ENCODE measurements at regions of chr12 and their contacts with region 1.

Region 1: DNA sequence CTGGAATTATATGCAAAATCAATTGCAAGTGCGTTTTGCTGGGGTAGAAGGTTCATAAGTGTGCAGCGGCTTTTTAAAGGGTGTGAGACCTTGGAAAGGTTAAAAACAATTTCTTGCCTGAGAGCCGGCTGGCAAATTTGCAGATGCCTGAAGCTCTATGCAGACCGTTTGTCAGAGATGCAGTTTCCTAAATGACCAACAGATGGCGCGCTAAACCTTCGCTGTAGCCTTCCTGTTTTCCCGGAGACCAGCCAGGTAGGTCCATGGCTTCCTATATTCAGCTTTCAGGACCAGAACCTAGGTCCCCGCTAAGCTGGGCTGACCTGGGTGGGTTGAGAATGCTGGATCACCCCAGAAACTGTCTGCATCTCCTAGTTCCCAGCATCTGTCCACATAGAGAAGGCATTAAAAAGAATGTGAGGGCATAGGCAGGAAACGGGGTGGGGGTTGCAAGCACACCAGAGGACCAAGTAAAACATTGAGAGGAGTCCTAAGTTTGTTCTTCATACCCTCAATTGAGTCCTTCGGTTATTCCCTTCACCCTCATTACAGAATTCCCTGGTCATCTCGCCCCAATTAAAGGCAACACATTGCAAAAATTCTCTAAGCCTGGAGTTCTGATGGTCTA is 5.7 kb upstream of the NOS1 start:
- DNase-seq: peak; percentile 76
- H3K4me3 ChIP-seq: peak overlapping the region in 1 of 2 experiments; percentile 7; a peak in 1 of 4 replicates
- H3K27ac ChIP-seq: peak overlapping the region in 1 of 2 experiments; percentile 65; a peak in 2 of 4 replicates
- H3K4me1 ChIP-seq: peaks cover 0 to 53% of the 10 kb centered on the region in 2 experiments; a peak in 2 of 4 replicates
- H3K27me3 ChIP-seq: peaks cover 10% of the 10 kb centered on the region; the same call in 1 of the 2 replicates
- CTCF ChIP-seq: peak; percentile 92
- EP300 ChIP-seq: no peak
- RAD21 ChIP-seq: peak; percentile 96

Region 2: DNA sequence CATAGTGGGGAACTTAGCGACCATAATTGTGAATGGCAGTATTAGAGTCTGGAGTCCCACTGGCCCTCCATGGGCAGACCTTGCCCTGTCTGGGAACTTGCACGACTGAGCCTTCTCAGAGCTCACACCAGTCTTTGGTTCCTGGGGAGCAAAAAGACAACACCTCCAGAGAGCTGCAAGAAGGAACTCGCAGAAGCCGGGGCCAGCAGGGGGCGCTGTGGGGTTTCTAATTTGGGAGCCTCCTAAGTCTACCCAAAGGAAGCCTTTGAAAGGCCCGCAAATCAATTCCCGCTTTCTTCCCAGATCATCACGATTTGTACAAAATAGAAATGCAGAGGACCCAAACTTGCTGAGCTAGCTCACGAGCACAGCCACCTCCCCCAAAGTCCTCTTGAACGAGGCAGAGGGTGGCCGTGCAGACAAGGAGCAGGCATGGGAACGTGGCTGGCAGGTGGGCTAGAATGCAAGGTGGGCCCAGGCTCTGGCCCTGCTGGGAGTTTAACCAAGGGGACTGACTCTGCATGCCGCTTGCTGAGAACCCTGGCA is 130.6 kb before region 1 on chr12:
- CTCF ChIA-PET with region 1: interaction called, 87 read pairs
- POLR2A ChIA-PET with region 1: no interaction called
- DNase-seq: peak; percentile 70
- H3K4me3 ChIP-seq: no peak overlapping the region; a peak in 1 of 4 replicates
- H3K27ac ChIP-seq: no peak overlapping the region
- H3K4me1 ChIP-seq: no peaks in the 10 kb centered on the region
- H3K27me3 ChIP-seq: no peaks in the 10 kb centered on the region; the same call in 1 of the 2 replicates
- CTCF ChIP-seq: peak; percentile 77
- EP300 ChIP-seq: no peak
- RAD21 ChIP-seq: peak; percentile 80

Region 3: GRCh38 chr12:117388951-117389446 is 21.9 kb after region 1 on chr12:
- CTCF ChIA-PET with region 1: interaction called, 34 read pairs
- POLR2A ChIA-PET with region 1: interaction called, 3 read pairs
- DNase-seq: peak; percentile 68
- H3K4me3 ChIP-seq: no peak overlapping the region
- H3K27ac ChIP-seq: peak overlapping the region in 1 of 2 experiments; percentile 93; a peak in 2 of 4 replicates
- H3K4me1 ChIP-seq: peaks cover 0 to 57% of the 10 kb centered on the region in 2 experiments; a peak in 1 of 4 replicates
- H3K27me3 ChIP-seq: no peaks in the 10 kb centered on the region
- CTCF ChIP-seq: no peak
- EP300 ChIP-seq: peak in 1 of 2 experiments; percentile 98; a peak in 2 of 4 replicates
- RAD21 ChIP-seq: no peak

Region 4: DNA sequence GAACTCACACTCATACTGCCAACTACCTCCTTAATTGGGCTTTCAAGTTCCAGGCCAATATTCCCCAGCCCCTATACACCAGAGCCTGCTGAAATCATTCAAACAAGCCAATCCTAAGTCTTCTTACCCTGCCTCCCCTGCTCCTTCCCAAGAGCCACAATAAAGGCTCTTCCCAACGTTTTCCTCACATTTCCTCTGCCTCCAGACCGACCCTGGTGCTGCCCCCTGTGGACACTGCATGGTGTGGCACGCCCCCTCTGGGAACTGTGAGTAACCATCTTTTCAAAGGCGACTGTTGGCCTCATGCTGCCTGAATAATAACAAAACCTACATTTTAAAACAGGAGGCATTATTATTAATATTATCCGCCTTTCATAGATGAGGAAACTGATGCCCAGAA is 105.9 kb after region 1 on chr12:
- CTCF ChIA-PET with region 1: interaction called, 17 read pairs
- POLR2A ChIA-PET with region 1: no interaction called
- DNase-seq: peak; percentile 67
- H3K4me3 ChIP-seq: no peak overlapping the region
- H3K27ac ChIP-seq: peak overlapping the region in 1 of 2 experiments; percentile 34; a peak in 1 of 4 replicates
- H3K4me1 ChIP-seq: peaks cover 0 to 27% of the 10 kb centered on the region in 2 experiments; a peak in 2 of 4 replicates
- H3K27me3 ChIP-seq: no peaks in the 10 kb centered on the region
- CTCF ChIP-seq: peak; percentile 56
- EP300 ChIP-seq: no peak
- RAD21 ChIP-seq: peak; percentile 58

Region 5: GRCh38 chr12:117671734-117672133 is 304.6 kb after region 1 on chr12:
- CTCF ChIA-PET with region 1: interaction called, 24 read pairs
- POLR2A ChIA-PET with region 1: no interaction called
- DNase-seq: peak; percentile 55
- H3K4me3 ChIP-seq: no peak overlapping the region
- H3K27ac ChIP-seq: no peak overlapping the region
- H3K4me1 ChIP-seq: peaks cover 6 to 11% of the 10 kb centered on the region in 2 experiments; a peak in 1 of 4 replicates
- H3K27me3 ChIP-seq: no peaks in the 10 kb centered on the region
- CTCF ChIP-seq: peak; percentile 64
- EP300 ChIP-seq: no peak
- RAD21 ChIP-seq: peak; percentile 70

Region 6: GRCh38 chr12:117857632-117858612 is 490.8 kb after region 1 on chr12:
- CTCF ChIA-PET with region 1: interaction called, 18 read pairs
- POLR2A ChIA-PET with region 1: no interaction called
- DNase-seq: peak; percentile 71
- H3K4me3 ChIP-seq: no peak overlapping the region; a peak in 1 of 4 replicates
- H3K27ac ChIP-seq: no peak overlapping the region
- H3K4me1 ChIP-seq: no peaks in the 10 kb centered on the region
- H3K27me3 ChIP-seq: no peaks in the 10 kb centered on the region
- CTCF ChIP-seq: peak; percentile 59
- EP300 ChIP-seq: no peak
- RAD21 ChIP-seq: no peak; the same call in 1 of the 2 replicates

Measured in SK-N-SH (cell line).